ENCODE measurements at regions of chr5 and their contacts with region 1.

Region 1: DNA sequence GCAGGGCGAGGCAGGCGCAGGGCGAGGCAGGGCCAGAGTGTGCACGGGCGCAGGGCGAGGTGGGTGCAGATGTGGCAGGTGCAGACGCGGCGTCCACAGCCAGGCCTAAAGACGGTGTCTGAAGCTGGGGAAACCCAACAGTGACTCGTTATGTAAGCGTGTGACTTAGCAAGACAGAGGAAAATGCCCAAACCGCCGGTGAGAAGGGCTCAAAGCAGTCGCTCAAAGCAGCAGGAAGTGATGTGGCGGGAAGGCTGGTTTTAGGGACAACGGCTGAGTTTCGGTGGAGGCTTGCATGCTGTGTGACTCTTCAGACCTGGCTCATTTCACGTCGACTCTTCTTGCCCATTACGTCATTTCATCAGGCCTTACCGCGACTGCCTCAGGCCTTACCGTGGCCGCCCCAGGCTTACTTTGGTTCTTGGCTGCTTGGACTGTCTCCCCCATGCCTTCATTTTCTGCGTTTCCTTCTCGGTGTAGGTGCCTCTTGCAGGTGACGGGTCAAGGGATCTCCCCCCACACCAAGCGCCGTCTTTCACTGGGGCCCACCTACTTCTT is 50.5 kb upstream of the EXOC3 start:
- DNase-seq: peak; percentile 48
- H3K4me3 ChIP-seq: no peak overlapping the region
- H3K27ac ChIP-seq: no peak overlapping the region
- H3K4me1 ChIP-seq: no peaks in the 10 kb centered on the region
- H3K27me3 ChIP-seq: peaks cover 1% of the 10 kb centered on the region
- CTCF ChIP-seq: no peak

Region 2: GRCh38 chr5:350355-350754 is 42.2 kb before region 1 on chr5:
- CTCF ChIA-PET with region 1: no interaction called
- dilution Hi-C with region 1: loop called (anchors 5 kb)
- in situ Hi-C with region 1: no loop called
- intact Hi-C with region 1: no loop called
- DNase-seq: no peak
- H3K4me3 ChIP-seq: no peak overlapping the region
- H3K27ac ChIP-seq: no peak overlapping the region
- H3K4me1 ChIP-seq: no peaks in the 10 kb centered on the region
- H3K27me3 ChIP-seq: no peaks in the 10 kb centered on the region
- CTCF ChIP-seq: peak in 1 of 2 donors; percentile 16